ENCODE measurements at regions of chr17 and their contacts with region 1.

Region 1: GRCh38 chr17:41966463-41967140 is at the start of gene CNP:
- DNase-seq: peak; percentile 79 to 96 (median 90)
- ATAC-seq: peak; percentile 80
- H3K4me3 ChIP-seq: peak within 1 kb of the TSS; percentile 91
- H3K4me3 Mint-ChIP-seq: peak within 1 kb of the TSS; percentile 85
- H3K27ac ChIP-seq: peak within 1 kb of the TSS; percentile 65 to 74
- H3K27ac Mint-ChIP-seq: peak within 1 kb of the TSS; percentile 94
- H3K4me1 ChIP-seq: peaks cover 41% of the 10 kb centered on the region
- H3K4me1 Mint-ChIP-seq: peaks cover 39% of the 10 kb centered on the region
- H3K27me3 ChIP-seq: no peaks in the 10 kb centered on the region
- H3K27me3 Mint-ChIP-seq: no peaks in the 10 kb centered on the region
- CTCF ChIP-seq: no peak
- total RNA-seq, gene CNP: 19.2 to 23.4 TPM

Region 2: DNA sequence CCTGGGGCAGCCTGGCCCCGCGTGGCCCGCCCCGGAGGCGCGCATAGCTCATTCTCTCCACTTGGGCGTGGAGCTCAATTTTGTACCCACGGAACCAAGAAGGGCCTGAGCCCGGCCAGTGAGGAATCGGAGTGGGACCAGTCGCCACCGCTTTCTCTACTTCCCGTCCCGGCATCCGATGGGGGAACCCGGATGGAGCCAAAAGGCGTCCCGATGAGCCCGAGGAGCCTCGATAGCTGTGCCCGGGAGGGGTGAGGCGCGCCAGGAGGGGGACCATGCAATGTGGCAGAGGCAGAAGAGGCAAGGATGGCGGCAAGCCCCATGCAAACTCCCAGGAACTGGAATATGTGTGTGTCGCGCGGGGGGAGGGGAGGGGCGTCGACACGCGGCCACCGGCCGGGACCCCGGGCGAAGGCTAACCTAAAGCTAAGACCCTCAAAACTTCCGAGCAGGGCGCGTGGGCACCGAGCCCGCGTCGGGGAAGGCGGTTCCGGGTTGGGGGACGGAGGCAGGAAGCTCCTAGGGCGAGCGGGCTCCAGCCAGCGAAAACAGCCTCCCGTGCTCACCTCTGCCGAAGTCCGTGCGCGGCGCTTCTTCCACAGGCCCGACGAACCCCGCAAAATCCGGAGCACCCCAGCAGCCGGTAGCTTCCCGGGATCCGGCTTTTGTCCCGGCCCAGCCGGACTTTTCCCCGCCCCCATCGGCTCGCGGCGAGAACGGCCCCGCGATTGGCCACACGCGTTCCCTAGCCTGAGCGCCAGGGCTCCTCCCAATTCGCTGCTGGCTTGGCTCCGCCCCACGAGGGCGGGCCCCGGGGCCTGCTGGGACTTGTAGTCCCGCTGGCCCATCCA is 48.1 kb before region 1 on chr17 and contains the start of gene ACLY:
- CTCF ChIA-PET with region 1: interaction called, 3 read pairs
- POLR2A ChIA-PET with region 1: interaction called, 15 read pairs
- intact Hi-C with region 1: loop called in 1 of 2 experiments (anchors 1 kb)
- DNase-seq: peak; percentile 87 to 98 (median 94)
- ATAC-seq: peak; percentile 99
- H3K4me3 ChIP-seq: peak within 1 kb of the TSS; percentile 90
- H3K4me3 Mint-ChIP-seq: peak within 1 kb of the TSS; percentile 95
- H3K27ac ChIP-seq: peak within 1 kb of the TSS; percentile 69 to 74
- H3K27ac Mint-ChIP-seq: peak within 1 kb of the TSS; percentile 64
- H3K4me1 ChIP-seq: peaks cover 35% of the 10 kb centered on the region
- H3K4me1 Mint-ChIP-seq: peaks cover 27% of the 10 kb centered on the region
- H3K27me3 ChIP-seq: no peaks in the 10 kb centered on the region
- H3K27me3 Mint-ChIP-seq: no peaks in the 10 kb centered on the region
- CTCF ChIP-seq: no peak
- total RNA-seq, gene ACLY: 25.9 to 28.3 TPM

Region 3: GRCh38 chr17:42067351-42068091 is 100.9 kb after region 1 on chr17:
- CTCF ChIA-PET with region 1: no interaction called
- POLR2A ChIA-PET with region 1: no interaction called
- intact Hi-C with region 1: loop called in 1 of 2 experiments (anchors 1 kb)
- DNase-seq: peak; percentile 56 to 83 (median 66)
- ATAC-seq: peak; percentile 53
- H3K4me3 ChIP-seq: no peak overlapping the region
- H3K4me3 Mint-ChIP-seq: no peak overlapping the region
- H3K27ac ChIP-seq: no peak overlapping the region
- H3K27ac Mint-ChIP-seq: no peak overlapping the region
- H3K4me1 ChIP-seq: peaks cover 24% of the 10 kb centered on the region
- H3K4me1 Mint-ChIP-seq: peaks cover 31% of the 10 kb centered on the region
- H3K27me3 ChIP-seq: peaks cover 8 to 11% of the 10 kb centered on the region in 2 experiments
- H3K27me3 Mint-ChIP-seq: peaks cover 24% of the 10 kb centered on the region
- CTCF ChIP-seq: peak; percentile 96

Region 4: DNA sequence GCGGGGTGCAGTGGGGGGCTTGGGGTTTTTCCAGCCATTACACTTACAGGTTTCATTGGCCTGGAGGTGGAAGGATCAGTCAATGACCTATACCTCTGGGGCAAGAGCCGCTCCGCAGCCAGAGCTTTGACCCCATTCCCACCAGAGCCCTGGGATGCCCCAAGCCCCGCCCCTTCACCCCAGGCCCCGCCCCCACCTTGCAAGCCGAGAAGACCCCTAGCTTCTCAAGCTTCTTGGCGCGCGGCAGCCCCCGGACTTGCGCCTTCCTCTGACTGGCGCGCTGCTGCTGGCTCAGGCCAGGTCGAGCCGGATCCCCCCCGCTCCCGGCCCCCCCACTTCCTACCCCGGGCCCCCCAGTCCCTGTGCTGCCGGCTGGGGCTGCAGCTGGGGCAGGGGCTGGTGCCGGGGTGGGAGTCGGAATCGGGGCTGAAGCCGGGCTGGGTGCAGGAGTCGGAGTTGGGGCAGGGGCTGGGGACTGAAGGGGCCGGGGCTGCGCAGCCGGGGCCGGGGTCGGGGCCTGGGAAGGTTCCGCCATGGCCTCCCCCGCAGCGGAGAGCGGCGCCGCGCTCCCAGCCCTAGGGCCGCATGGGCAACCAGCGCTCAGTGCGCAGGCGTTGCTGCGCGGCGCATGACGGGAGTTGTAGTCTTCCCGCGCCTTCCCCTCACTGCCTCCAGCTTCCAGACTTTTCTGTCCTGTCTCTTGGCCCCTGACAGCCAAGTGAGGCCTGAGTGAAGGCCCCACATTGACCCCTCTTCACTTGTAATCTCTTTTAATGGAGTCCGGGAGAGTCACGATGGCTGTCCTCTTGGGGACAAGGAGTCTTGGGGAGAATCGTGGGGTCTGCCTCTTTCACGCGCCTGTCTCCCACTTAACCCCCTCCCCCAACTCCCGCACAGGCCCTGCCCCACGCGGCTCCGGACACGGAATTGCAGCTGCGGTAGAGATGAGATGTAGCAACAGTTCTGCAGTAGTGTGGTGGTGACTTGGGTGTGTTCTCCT is 154.5 kb after region 1 on chr17 and contains the start of gene KAT2A:
- CTCF ChIA-PET with region 1: interaction called, 3 read pairs
- POLR2A ChIA-PET with region 1: interaction called, 10 read pairs
- intact Hi-C with region 1: loop called (anchors 1 kb)
- DNase-seq: peak; percentile 59 to 89 (median 72)
- ATAC-seq: peak; percentile 88
- H3K4me3 ChIP-seq: peak within 1 kb of the TSS; percentile 48
- H3K4me3 Mint-ChIP-seq: peak within 1 kb of the TSS; percentile 82
- H3K27ac ChIP-seq: no peak within 1 kb of the TSS
- H3K27ac Mint-ChIP-seq: no peak within 1 kb of the TSS
- H3K4me1 ChIP-seq: peaks cover 28% of the 10 kb centered on the region
- H3K4me1 Mint-ChIP-seq: peaks cover 25% of the 10 kb centered on the region
- H3K27me3 ChIP-seq: no peaks in the 10 kb centered on the region
- H3K27me3 Mint-ChIP-seq: no peaks in the 10 kb centered on the region
- CTCF ChIP-seq: no peak
- total RNA-seq, gene KAT2A: 38.5 to 42.4 TPM